Ascending aorta (tissue), 2 donors: ENCODE measurements at regions of chr15 and their contacts with region 1.

Region 1: GRCh38 chr15:40893733-40894688 is at the start of gene VPS18:
- DNase-seq: peak; percentile 91 to 99
- H3K4me3 ChIP-seq: peak within 1 kb of the TSS; percentile 65 to 82
- H3K27ac ChIP-seq: peak within 1 kb of the TSS; percentile 85 to 89
- H3K4me1 ChIP-seq: peaks cover 0 to 13% of the 10 kb centered on the region in 2 donors
- H3K27me3 ChIP-seq: no peaks in the 10 kb centered on the region
- CTCF ChIP-seq: peak; percentile 98 to 99 (median 98)
- total RNA-seq, gene VPS18: 51.8 TPM

Region 2: GRCh38 chr15:40593588-40594428 is 300.2 kb before region 1 on chr15 and contains the start of gene KNL1:
- intact Hi-C with region 1: loop called (anchors 5 kb)
- DNase-seq: peak; percentile 72 to 96
- H3K4me3 ChIP-seq: peak within 1 kb of the TSS; percentile 50 to 73
- H3K27ac ChIP-seq: peak within 1 kb of the TSS; percentile 78 to 87
- H3K4me1 ChIP-seq: peaks cover 0 to 9% of the 10 kb centered on the region in 2 donors
- H3K27me3 ChIP-seq: no peaks in the 10 kb centered on the region
- CTCF ChIP-seq: no peak
- total RNA-seq, gene KNL1: not detected

Region 3: GRCh38 chr15:40694688-40695468 is 199.1 kb before region 1 on chr15 and contains the start of gene RAD51:
- intact Hi-C with region 1: loop called (anchors 2 kb)
- DNase-seq: peak; percentile 70 to 94
- H3K4me3 ChIP-seq: peak within 1 kb of the TSS; percentile 82 to 99
- H3K27ac ChIP-seq: peak within 1 kb of the TSS; percentile 99
- H3K4me1 ChIP-seq: peaks cover 0 to 8% of the 10 kb centered on the region in 2 donors
- H3K27me3 ChIP-seq: no peaks in the 10 kb centered on the region
- CTCF ChIP-seq: no peak
- total RNA-seq, gene RAD51: not detected

Region 4: DNA sequence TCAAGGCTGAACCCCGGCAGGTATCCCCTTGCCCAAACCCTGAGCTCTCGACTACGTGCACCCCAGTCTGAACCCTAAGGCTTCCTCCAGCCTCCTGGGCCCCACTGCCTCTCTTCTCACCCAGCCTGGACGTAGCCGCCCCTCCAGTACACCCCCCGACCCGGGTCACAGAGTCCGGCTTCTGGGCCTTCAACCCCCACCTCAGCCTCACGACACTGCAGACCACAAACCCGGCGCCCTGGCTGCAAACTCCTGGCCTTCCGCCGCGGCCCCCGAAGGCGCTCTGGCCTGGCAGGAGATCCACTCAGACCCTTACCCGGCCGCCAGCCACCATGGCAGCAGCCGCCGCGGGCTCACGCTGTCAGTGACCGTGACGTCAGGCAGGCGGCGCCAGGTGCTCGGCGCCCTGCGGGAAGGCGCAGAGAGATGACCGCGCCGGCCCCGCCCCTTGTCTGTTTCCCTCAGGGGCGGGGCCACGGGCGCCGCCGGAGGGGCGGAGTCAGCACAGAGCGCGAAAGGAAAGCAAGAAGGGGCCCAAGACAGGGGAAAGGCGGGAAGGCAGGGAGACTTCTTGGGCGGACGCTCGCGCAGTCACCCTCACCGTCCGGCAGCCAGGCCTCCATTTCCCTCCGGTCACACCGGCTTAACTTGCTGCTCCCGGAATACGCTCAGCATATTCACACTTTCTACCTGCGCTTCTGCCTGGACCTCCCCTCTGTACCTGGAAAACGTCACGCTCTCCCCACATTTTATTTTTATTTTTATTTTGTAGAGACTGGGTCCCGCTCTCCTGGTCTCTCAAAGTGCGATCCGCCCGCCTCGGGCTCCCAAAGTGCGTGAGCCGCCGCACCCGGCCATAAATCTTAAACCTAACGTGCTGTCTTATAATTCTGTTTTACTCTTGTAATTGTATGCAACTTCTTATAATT is 138.9 kb before region 1 on chr15 and contains the start of gene RMDN3:
- intact Hi-C with region 1: loop called (anchors 2 kb)
- DNase-seq: peak; percentile 62 to 95
- H3K4me3 ChIP-seq: peak within 1 kb of the TSS; percentile 95 to 98
- H3K27ac ChIP-seq: peak within 1 kb of the TSS; percentile 85 to 86
- H3K4me1 ChIP-seq: peaks cover 0 to 12% of the 10 kb centered on the region in 2 donors
- H3K27me3 ChIP-seq: no peaks in the 10 kb centered on the region
- CTCF ChIP-seq: peak in 1 of 3 experiments; percentile 17
- total RNA-seq, gene RMDN3: 6.0 TPM

Region 5: DNA sequence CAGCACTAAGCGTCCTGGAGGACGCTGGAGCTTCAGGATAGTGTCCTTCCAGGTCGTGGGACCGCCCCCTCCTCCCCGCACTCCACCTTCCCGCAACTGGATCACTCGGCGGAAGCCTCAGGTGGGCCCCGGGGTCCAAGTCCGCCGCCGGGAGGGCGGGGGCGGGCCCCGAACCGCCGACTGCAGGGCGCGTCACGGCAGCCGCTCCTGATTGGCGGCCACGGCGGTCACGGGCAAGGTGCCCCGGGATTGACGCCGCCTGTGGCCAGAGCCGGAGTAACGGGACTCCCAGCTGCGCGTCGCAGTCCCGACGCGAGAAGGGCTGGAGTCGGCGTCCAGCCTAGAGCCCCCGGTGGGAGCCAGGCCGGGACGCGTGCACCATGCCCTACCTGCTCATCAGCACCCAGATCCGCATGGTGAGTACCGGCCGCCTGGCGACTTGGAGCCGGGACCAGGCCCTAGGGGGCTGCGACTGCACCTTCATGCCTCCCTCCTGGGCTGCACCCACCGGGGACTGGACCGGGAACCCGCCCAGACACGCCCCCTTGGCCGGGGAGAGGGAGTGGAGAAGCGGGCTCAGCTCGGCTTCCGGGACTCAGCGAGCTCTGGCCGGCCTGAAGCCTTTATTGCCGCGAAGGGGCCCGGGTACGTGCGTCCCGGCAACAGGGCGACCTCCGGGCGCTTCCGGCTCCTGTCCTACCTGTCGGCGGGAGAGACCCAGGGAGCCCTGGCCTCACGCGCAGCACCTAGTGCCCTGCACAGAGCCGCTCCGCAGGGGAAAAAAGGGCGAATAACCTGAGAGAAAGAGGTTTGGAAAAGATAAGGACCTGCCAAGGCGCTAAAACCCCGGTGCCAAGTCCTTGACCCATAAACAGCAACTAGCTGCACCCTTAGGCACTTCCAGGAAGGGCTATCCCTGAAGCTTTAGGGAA is 129.9 kb before region 1 on chr15 and contains the start of gene GCHFR:
- intact Hi-C with region 1: loop called (anchors 1 kb)
- DNase-seq: peak; percentile 26 to 87
- H3K4me3 ChIP-seq: peak within 1 kb of the TSS; percentile 55 to 80
- H3K27ac ChIP-seq: peak within 1 kb of the TSS; percentile 81 to 82
- H3K4me1 ChIP-seq: peaks cover 5 to 16% of the 10 kb centered on the region in 2 donors
- H3K27me3 ChIP-seq: no peaks in the 10 kb centered on the region
- CTCF ChIP-seq: peak; percentile 44 to 59 (median 51)
- total RNA-seq, gene GCHFR: 26.4 TPM

Region 6: DNA sequence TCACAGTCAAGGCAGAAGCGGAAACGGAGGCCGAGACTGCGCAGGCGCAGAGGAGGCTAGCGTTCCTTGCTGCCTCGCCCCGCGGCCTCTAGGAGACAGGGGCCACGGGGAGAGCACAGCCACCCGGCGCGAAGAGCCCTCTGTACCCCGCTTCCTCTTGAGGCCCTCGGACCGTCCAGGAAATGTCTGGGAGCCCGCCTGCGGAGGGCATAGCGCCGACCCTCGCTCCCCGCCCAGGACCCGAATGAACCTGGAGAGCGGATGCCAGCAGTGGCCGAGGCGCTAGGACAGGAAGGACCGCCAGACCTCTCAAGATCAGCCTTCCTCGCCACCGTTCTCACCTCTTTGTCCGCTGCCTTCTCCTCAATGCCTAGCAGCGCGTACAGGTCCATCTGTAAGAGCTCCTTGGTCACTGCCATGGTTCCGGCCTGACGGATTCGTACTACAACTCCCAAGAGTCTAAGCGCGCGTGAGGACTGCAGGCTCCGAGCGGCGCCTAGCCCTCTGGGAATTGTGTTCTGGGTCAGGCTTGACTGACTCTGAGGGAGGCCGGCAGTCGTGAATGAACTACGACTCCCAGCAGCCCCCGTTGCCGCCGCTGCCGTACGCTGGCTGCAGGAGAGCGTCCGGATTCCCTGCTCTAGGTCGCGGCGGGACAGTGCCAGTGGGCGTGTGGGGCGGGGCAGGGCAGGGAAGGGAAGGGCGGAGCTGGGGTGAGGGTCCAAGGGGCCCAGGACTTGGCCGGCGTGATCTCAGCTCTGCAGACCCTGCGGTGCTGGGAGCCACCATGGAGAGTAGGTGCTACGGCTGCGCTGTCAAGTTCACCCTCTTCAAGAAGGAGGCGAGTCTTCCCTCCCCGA is 86.8 kb before region 1 on chr15 and contains the starts of genes DNAJC17 and ZFYVE19:
- intact Hi-C with region 1: loop called (anchors 2 kb)
- DNase-seq: peak; percentile 91 to 98
- H3K4me3 ChIP-seq: peak within 1 kb of the TSS; percentile 77 to 88
- H3K27ac ChIP-seq: peak within 1 kb of the TSS; percentile 89 to 93
- H3K4me1 ChIP-seq: peaks cover 0 to 18% of the 10 kb centered on the region in 2 donors
- H3K27me3 ChIP-seq: no peaks in the 10 kb centered on the region
- CTCF ChIP-seq: peak in 2 of 3 experiments; percentile 5 to 7
- total RNA-seq, gene DNAJC17: 26.2 TPM
- total RNA-seq, gene ZFYVE19: 61.0 TPM

Region 7: GRCh38 chr15:40857601-40858341 is 36.2 kb before region 1 on chr15:
- intact Hi-C with region 1: loop called (anchors 1 kb)
- DNase-seq: peak in 1 of 2 donors; percentile 82
- H3K4me3 ChIP-seq: no peak overlapping the region
- H3K27ac ChIP-seq: no peak overlapping the region
- H3K4me1 ChIP-seq: no peaks in the 10 kb centered on the region
- H3K27me3 ChIP-seq: no peaks in the 10 kb centered on the region
- CTCF ChIP-seq: peak; percentile 88 to 91 (median 91)